Heart left ventricle (tissue), 16 donors: ENCODE measurements at regions of chr1 and their contacts with region 1.

Region 1: DNA sequence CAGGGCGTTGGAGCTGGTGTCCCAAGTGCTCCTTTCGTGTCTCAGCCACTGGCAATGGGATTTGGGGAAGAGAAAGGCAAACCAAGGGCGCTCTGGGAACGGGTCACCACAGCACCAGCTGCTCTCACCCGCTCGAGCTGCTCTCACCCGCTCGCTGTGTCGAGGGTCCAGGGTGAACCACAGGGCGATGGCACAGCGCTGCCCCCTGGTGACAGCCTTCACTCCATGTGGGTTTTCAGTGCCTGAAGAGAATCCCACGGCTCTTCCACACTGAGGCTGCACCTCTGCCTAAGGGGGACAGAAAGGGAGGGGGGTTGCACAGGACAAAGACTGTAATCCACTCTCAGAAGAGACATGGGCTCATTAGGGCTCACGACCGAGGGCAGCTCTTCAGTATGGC is 7.1 kb upstream of the CLDN19 start:
- DNase-seq: peak in 2 of 5 donors; percentile 49 to 55
- ATAC-seq: peak in 3 of 4 donors; percentile 65 to 70 (median 68)
- H3K4me3 ChIP-seq: no peak overlapping the region
- H3K27ac ChIP-seq: no peak overlapping the region
- H3K4me1 ChIP-seq: peaks cover 0 to 19% (median 0%) of the 10 kb centered on the region in 12 donors
- H3K27me3 ChIP-seq: no peaks in the 10 kb centered on the region
- CTCF ChIP-seq: peak; percentile 47 to 72 (median 60)
- POLR2A ChIP-seq: no peak

Region 2: DNA sequence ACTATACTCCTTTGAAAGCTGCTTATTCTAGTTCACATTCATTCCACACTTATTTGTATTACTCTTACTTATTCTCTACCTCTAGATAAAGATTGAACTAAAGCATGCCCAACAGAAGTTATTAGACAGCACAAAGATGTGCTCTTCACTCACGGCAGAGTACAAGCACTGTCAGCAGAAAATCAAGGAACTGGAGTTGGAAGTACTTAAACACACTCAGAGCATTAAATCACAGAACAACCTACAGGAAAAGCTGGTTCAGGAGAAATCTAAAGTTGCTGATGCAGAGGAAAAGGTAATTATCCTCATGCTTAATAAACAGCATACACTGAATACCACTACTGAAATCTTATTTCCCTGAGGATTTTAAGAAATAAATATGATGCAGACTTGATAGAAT is 170.2 kb before region 1 on chr1:
- intact Hi-C with region 1: loop called (anchors 1 to 5 kb)
- DNase-seq: no peak
- ATAC-seq: no peak
- H3K4me3 ChIP-seq: no peak overlapping the region
- H3K27ac ChIP-seq: no peak overlapping the region
- H3K4me1 ChIP-seq: no peaks in the 10 kb centered on the region
- H3K27me3 ChIP-seq: no peaks in the 10 kb centered on the region
- CTCF ChIP-seq: no peak
- POLR2A ChIP-seq: no peak

Region 3: GRCh38 chr1:42593486-42594100 is 153.5 kb before region 1 on chr1:
- intact Hi-C with region 1: loop called in 1 of 10 experiments (anchors 5 kb)
- DNase-seq: no peak
- ATAC-seq: no peak
- H3K4me3 ChIP-seq: no peak overlapping the region
- H3K27ac ChIP-seq: no peak overlapping the region
- H3K4me1 ChIP-seq: no peaks in the 10 kb centered on the region
- H3K27me3 ChIP-seq: no peaks in the 10 kb centered on the region
- CTCF ChIP-seq: no peak
- POLR2A ChIP-seq: no peak

Region 4: GRCh38 chr1:42860339-42861013 is 113.4 kb after region 1 on chr1:
- intact Hi-C with region 1: no loop called
- DNase-seq: no peak
- ATAC-seq: no peak
- H3K4me3 ChIP-seq: no peak overlapping the region
- H3K27ac ChIP-seq: no peak overlapping the region
- H3K4me1 ChIP-seq: no peaks in the 10 kb centered on the region
- H3K27me3 ChIP-seq: peaks cover 0 to 10% (median 0%) of the 10 kb centered on the region in 9 donors
- CTCF ChIP-seq: peak in 2 of 12 donors; percentile 9 to 13
- POLR2A ChIP-seq: no peak